Tibial artery (tissue), 4 donors: ENCODE measurements at regions of chr1 and their contacts with region 1.

Region 1: GRCh38 chr1:40161125-40161887 is at the start of gene RLF:
- DNase-seq: peak; percentile 94 to 97
- H3K4me3 ChIP-seq: peak within 1 kb of the TSS; percentile 88 to 96
- H3K27ac ChIP-seq: peak within 1 kb of the TSS; percentile 98 to 99
- H3K4me1 ChIP-seq: peaks cover 0 to 38% (median 22%) of the 10 kb centered on the region in 4 donors
- H3K27me3 ChIP-seq: no peaks in the 10 kb centered on the region
- CTCF ChIP-seq: peak in 1 of 2 experiments; percentile 4

Region 2: GRCh38 chr1:40257688-40258444 is 96.6 kb after region 1 on chr1 and contains the start of gene ZMPSTE24:
- intact Hi-C with region 1: loop called (anchors 10 kb)
- DNase-seq: peak; percentile 94 to 98
- H3K4me3 ChIP-seq: peak within 1 kb of the TSS; percentile 92 to 96
- H3K27ac ChIP-seq: peak within 1 kb of the TSS; percentile 95 to 96
- H3K4me1 ChIP-seq: peaks cover 0 to 56% (median 33%) of the 10 kb centered on the region in 4 donors
- H3K27me3 ChIP-seq: no peaks in the 10 kb centered on the region
- CTCF ChIP-seq: no peak